ENCODE measurements at regions of chr3 and their contacts with region 1.

Region 1: GRCh38 chr3:13648060-13649001 is 99.4 kb downstream of the FBLN2 start:
- DNase-seq: peak; percentile 50
- ATAC-seq: peak; percentile 76
- H3K4me3 ChIP-seq: no peak overlapping the region
- H3K27ac ChIP-seq: no peak overlapping the region
- H3K4me1 ChIP-seq: peaks cover 6% of the 10 kb centered on the region; the same call in 1 of the 2 replicates
- H3K27me3 ChIP-seq: peaks cover 3 to 50% of the 10 kb centered on the region in 2 experiments
- CTCF ChIP-seq: peak; percentile 99
- EP300 ChIP-seq: no peak
- POLR2A ChIP-seq: no peak
- RAD21 ChIP-seq: peak; percentile 91

Region 2: DNA sequence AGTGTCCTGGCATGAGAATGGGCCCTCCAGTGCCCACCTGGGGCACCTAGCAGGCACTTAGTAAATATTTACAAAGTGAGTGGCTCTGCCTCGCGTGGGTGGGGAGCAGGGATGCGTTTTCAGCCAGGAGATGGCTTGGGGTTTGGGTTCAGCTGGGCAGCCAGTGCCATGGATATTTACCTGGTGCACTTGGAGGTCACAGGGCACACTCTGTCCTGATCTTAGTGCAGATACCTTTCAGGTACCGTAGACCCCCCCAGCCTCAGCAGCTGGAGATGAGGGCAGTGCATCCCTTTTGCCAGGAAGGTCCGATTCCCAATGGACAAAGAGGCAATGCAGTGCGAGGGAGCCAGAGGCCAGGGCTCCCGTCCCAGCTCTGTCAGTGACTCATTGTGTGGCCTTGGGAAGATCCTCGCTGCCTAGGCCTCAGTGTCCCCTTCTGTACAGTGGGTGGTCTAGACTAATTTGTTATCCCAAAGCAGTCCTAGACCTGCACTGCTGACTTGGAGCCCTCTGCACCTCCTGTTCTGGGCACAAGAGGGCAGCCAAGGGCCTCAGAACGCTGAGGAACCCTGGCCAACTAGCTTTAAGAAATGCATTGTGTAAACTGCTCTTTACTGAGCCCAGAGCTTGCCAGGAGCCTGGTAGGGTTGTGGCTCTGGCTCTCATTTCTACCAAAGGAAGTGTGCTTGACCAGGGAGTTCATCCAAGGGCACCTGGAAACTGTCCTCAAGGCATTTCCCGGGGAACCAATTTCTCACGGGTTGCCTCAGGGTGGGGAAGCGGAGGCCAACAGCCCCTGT is 152.2 kb before region 1 on chr3:
- CTCF ChIA-PET with region 1: interaction called, 96 read pairs
- POLR2A ChIA-PET with region 1: interaction called, 3 read pairs
- in situ Hi-C with region 1: loop called (anchors 5 kb)
- intact Hi-C with region 1: loop called (anchors 1 kb)
- DNase-seq: peak; percentile 49
- ATAC-seq: peak; percentile 78
- H3K4me3 ChIP-seq: no peak overlapping the region
- H3K27ac ChIP-seq: no peak overlapping the region
- H3K4me1 ChIP-seq: peaks cover 7% of the 10 kb centered on the region; the same call in 1 of the 2 replicates
- H3K27me3 ChIP-seq: no peaks in the 10 kb centered on the region
- CTCF ChIP-seq: peak; percentile 92
- EP300 ChIP-seq: no peak
- POLR2A ChIP-seq: no peak
- RAD21 ChIP-seq: peak; percentile 75

Region 3: GRCh38 chr3:13564751-13565560 is 83.4 kb before region 1 on chr3:
- CTCF ChIA-PET with region 1: interaction called, 3 read pairs
- POLR2A ChIA-PET with region 1: no interaction called
- in situ Hi-C with region 1: loop called (anchors 5 kb)
- intact Hi-C with region 1: loop called (anchors 1 kb)
- DNase-seq: no peak
- ATAC-seq: no peak
- H3K4me3 ChIP-seq: no peak overlapping the region
- H3K27ac ChIP-seq: no peak overlapping the region
- H3K4me1 ChIP-seq: no peaks in the 10 kb centered on the region
- H3K27me3 ChIP-seq: peaks cover 11 to 68% of the 10 kb centered on the region in 2 experiments; a peak in 4 of 5 replicates
- CTCF ChIP-seq: no peak
- EP300 ChIP-seq: no peak
- POLR2A ChIP-seq: no peak
- RAD21 ChIP-seq: no peak

Region 4: GRCh38 chr3:13570391-13571194 is 77.7 kb before region 1 on chr3:
- CTCF ChIA-PET with region 1: interaction called, 3 read pairs
- POLR2A ChIA-PET with region 1: no interaction called
- in situ Hi-C with region 1: loop called (anchors 5 kb)
- intact Hi-C with region 1: loop called (anchors 1 kb)
- DNase-seq: no peak
- ATAC-seq: peak; percentile 70
- H3K4me3 ChIP-seq: no peak overlapping the region
- H3K27ac ChIP-seq: no peak overlapping the region
- H3K4me1 ChIP-seq: no peaks in the 10 kb centered on the region
- H3K27me3 ChIP-seq: peaks cover 8 to 58% of the 10 kb centered on the region in 2 experiments; a peak in 3 of 5 replicates
- CTCF ChIP-seq: peak; percentile 49
- EP300 ChIP-seq: no peak
- POLR2A ChIP-seq: no peak
- RAD21 ChIP-seq: no peak

Region 5: DNA sequence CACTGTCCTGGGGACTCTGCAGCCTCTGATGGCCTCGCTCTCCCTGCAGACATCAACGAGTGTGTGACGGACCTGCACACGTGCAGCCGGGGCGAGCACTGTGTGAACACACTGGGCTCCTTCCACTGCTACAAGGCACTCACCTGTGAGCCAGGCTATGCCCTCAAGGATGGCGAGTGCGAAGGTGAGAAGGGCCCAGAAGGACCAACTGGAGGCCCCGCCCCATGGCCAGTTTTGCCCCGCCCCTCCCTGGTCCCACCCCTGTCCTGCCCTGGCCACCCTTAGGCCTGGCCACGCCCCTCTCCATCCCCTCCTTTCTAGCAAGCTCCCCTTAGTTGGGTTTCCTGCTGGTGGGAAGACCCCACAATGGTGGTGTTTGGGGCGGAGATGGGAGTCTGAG is 21.9 kb before region 1 on chr3:
- CTCF ChIA-PET with region 1: no interaction called
- POLR2A ChIA-PET with region 1: no interaction called
- in situ Hi-C with region 1: no loop called
- intact Hi-C with region 1: no loop called
- DNase-seq: no peak
- ATAC-seq: no peak
- H3K4me3 ChIP-seq: no peak overlapping the region
- H3K27ac ChIP-seq: no peak overlapping the region
- H3K4me1 ChIP-seq: peaks cover 10% of the 10 kb centered on the region
- H3K27me3 ChIP-seq: peaks cover 11 to 48% of the 10 kb centered on the region in 2 experiments; a peak in 4 of 5 replicates
- CTCF ChIP-seq: no peak
- EP300 ChIP-seq: no peak
- POLR2A ChIP-seq: no peak
- RAD21 ChIP-seq: no peak

Region 6: DNA sequence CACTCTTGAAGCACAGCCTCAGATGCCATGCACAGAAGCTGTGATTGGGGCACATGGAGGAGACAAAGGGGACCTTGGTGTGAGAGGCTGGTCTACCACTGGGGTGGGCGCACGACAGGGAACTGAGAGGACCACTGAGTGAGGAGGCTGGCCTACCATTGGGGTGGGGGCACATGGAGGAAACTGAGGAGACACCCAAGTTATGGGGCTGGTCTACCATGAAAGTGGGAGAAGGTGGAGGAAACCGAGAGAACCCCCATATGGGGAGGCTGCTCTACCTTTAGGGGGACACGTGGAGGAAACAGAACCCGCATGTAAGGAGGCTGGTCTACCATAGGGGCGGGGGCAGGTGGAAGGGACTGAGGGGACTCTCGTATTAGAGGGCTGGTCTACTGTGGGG is 54.0 kb after region 1 on chr3:
- CTCF ChIA-PET with region 1: no interaction called
- POLR2A ChIA-PET with region 1: no interaction called
- in situ Hi-C with region 1: no loop called
- intact Hi-C with region 1: no loop called
- DNase-seq: no peak
- ATAC-seq: no peak
- H3K4me3 ChIP-seq: no peak overlapping the region
- H3K27ac ChIP-seq: no peak overlapping the region
- H3K4me1 ChIP-seq: no peaks in the 10 kb centered on the region
- H3K27me3 ChIP-seq: peaks cover 0 to 10% of the 10 kb centered on the region in 2 experiments; a peak in 3 of 5 replicates
- CTCF ChIP-seq: no peak
- EP300 ChIP-seq: no peak
- POLR2A ChIP-seq: no peak
- RAD21 ChIP-seq: no peak

Region 7: GRCh38 chr3:13850158-13850945 is 202.0 kb after region 1 on chr3:
- CTCF ChIA-PET with region 1: no interaction called
- POLR2A ChIA-PET with region 1: no interaction called
- in situ Hi-C with region 1: no loop called
- intact Hi-C with region 1: no loop called
- DNase-seq: peak; percentile 11
- ATAC-seq: peak; percentile 53
- H3K4me3 ChIP-seq: no peak overlapping the region
- H3K27ac ChIP-seq: no peak overlapping the region
- H3K4me1 ChIP-seq: no peaks in the 10 kb centered on the region
- H3K27me3 ChIP-seq: peaks cover 1 to 48% of the 10 kb centered on the region in 2 experiments; a peak in 4 of 5 replicates
- CTCF ChIP-seq: no peak
- EP300 ChIP-seq: no peak
- POLR2A ChIP-seq: no peak
- RAD21 ChIP-seq: no peak

Measured in HepG2 (cell line).